ENCODE measurements at regions of chr1 and their contacts with region 1.

Region 1: DNA sequence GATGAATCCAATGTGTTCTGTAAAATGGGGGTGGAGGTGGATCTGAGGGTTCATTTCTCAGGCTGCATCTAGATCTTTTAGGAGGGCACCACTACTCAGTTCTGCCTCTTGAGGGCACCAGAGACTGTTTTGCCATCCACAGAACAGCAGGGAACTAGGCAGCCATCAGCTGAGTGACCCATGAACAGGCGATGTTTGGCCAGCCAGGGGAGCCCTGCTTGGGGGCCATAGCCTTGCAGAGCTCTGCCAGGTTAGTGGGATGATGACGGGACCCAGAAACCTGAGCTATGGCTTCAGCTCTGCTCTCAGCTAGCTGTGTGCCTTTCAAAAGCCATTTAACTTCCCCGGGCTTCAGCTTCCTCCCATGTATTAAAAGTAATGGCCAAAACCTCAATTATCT is 13.4 kb upstream of the NOS1AP start:
- DNase-seq: peak in 4 of 5 donors; percentile 77 to 87 (median 80)
- H3K4me3 ChIP-seq: no peak overlapping the region
- H3K27ac ChIP-seq: no peak overlapping the region
- H3K4me1 ChIP-seq: no peaks in the 10 kb centered on the region
- H3K27me3 ChIP-seq: no peaks in the 10 kb centered on the region
- CTCF ChIP-seq: peak; percentile 92

Region 2: DNA sequence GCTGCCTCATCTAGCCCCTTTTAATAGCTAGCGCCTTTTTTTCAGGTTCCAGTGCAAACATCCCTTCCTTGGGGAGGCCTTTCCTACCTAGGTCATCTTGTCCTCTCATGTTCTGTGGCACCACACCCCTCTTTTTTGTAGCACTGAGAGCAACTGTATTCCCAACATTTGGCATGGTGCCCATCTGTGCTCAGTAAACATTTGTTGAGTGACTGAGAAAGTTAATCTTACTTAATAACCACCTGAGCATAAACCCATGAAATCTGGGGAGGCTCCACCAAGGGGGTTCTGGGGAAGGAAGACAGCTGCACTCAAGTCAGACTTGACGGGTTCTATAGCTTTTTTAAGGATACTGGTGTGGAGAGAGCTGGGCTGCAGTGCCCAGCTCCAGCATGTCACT is 103.5 kb after region 1 on chr1:
- intact Hi-C with region 1: no loop called
- DNase-seq: peak in 2 of 5 donors; percentile 39 to 50
- H3K4me3 ChIP-seq: no peak overlapping the region
- H3K27ac ChIP-seq: no peak overlapping the region
- H3K4me1 ChIP-seq: peaks cover 0 to 7% (median 5%) of the 10 kb centered on the region in 3 donors
- H3K27me3 ChIP-seq: no peaks in the 10 kb centered on the region
- CTCF ChIP-seq: no peak

Region 3: DNA sequence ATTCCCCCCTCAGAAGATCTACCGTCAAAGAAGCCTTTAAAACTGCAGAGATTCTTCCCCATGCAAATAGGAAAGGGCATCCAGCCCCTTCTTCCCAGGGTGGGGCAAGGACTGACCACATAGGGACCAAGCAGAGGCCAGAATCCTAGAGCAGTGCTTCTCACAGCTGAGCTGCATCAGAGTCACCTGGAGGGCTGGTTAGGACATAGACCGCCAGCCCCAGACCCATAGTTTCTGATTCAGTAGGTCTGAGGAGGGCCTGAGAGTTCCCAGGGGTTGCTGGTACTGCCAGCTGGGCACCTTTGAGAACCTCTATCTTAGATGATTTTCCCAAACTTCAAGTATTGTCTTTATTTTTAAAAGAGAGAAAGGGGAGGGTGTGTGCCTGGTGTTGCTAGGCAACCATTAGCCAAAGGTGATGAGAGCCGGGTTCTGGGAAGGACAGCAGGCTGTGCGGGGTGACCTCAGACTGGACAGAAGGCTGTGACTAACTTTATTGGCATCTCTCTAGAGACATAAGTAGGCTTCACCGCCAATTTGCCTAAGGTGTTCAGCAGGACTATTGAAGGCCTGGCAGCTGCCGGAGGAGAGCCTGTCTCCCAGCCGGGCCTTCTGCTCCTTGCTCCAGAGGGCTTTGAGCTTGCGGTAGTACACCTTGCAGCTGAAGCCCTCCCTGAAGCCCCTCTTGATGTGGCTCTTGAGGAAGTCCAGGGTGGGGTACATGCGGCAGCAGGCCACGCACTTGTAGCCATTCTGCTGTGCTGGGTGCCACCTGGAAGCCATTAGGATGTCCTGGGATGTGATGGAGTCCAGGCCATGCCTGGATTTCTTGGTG is 317.7 kb after region 1 on chr1:
- intact Hi-C with region 1: loop called (anchors 10 kb)
- DNase-seq: no peak
- H3K4me3 ChIP-seq: no peak overlapping the region
- H3K27ac ChIP-seq: no peak overlapping the region
- H3K4me1 ChIP-seq: no peaks in the 10 kb centered on the region
- H3K27me3 ChIP-seq: no peaks in the 10 kb centered on the region
- CTCF ChIP-seq: no peak

Region 4: GRCh38 chr1:162391790-162392563 is 335.9 kb after region 1 on chr1:
- intact Hi-C with region 1: no loop called
- DNase-seq: peak in 2 of 5 donors; percentile 45 to 65
- H3K4me3 ChIP-seq: peak overlapping the region in 1 of 3 donors; percentile 15
- H3K27ac ChIP-seq: no peak overlapping the region
- H3K4me1 ChIP-seq: peaks cover 0 to 6% (median 0%) of the 10 kb centered on the region in 3 donors
- H3K27me3 ChIP-seq: no peaks in the 10 kb centered on the region
- CTCF ChIP-seq: peak; percentile 75

Measured in kidney (tissue), 22 donors.